Natural killer cell (primary cell): ENCODE measurements at regions of chr10 and their contacts with region 1.

Region 1: GRCh38 chr10:124530215-124530665 is 68.6 kb downstream of the LHPP start:
- DNase-seq: peak; percentile 84 to 90
- ATAC-seq: peak; percentile 91 to 93 (median 93)
- H3K4me3 ChIP-seq: no peak overlapping the region
- H3K4me3 Mint-ChIP-seq: no peak overlapping the region
- H3K27ac ChIP-seq: no peak overlapping the region
- H3K27ac Mint-ChIP-seq: peak overlapping the region in 1 of 2 donors; percentile 69
- H3K4me1 ChIP-seq: peaks cover 29% of the 10 kb centered on the region
- H3K4me1 Mint-ChIP-seq: peaks cover 16 to 20% of the 10 kb centered on the region in 2 donors
- H3K27me3 ChIP-seq: no peaks in the 10 kb centered on the region
- H3K27me3 Mint-ChIP-seq: peaks cover 0 to 3% of the 10 kb centered on the region in 2 donors
- CTCF ChIP-seq: peak; percentile 77

Region 2: GRCh38 chr10:124827474-124827873 is 297.2 kb after region 1 on chr10:
- intact Hi-C with region 1: loop called (anchors 1 kb)
- DNase-seq: peak in 1 of 2 donors; percentile 55
- ATAC-seq: no peak
- H3K4me3 ChIP-seq: no peak overlapping the region
- H3K4me3 Mint-ChIP-seq: no peak overlapping the region
- H3K27ac ChIP-seq: no peak overlapping the region
- H3K27ac Mint-ChIP-seq: no peak overlapping the region
- H3K4me1 ChIP-seq: no peaks in the 10 kb centered on the region
- H3K4me1 Mint-ChIP-seq: no peaks in the 10 kb centered on the region
- H3K27me3 ChIP-seq: no peaks in the 10 kb centered on the region
- H3K27me3 Mint-ChIP-seq: no peaks in the 10 kb centered on the region
- CTCF ChIP-seq: peak; percentile 78